ENCODE measurements at regions of chr6 and their contacts with region 1.

Region 1: GRCh38 chr6:71420693-71421328 is 132.2 kb downstream of the OGFRL1 start:
- DNase-seq: peak; percentile 99
- H3K4me3 ChIP-seq: peak overlapping the region; percentile 74 to 95 (median 88)
- H3K27ac ChIP-seq: peak overlapping the region; percentile 94 to 99 (median 96)
- H3K4me1 ChIP-seq: peaks cover 0 to 25% (median 6%) of the 10 kb centered on the region in 4 donors
- H3K27me3 ChIP-seq: no peaks in the 10 kb centered on the region
- CTCF ChIP-seq: no peak
- EP300 ChIP-seq: no peak
- POLR2A ChIP-seq: peak; percentile 90 to 94

Region 2: GRCh38 chr6:71288228-71289001 is 132.4 kb before region 1 on chr6 and contains the start of gene OGFRL1:
- intact Hi-C with region 1: loop called (anchors 5 kb)
- DNase-seq: peak; percentile 88
- H3K4me3 ChIP-seq: peak within 1 kb of the TSS; percentile 65 to 85 (median 80)
- H3K27ac ChIP-seq: peak within 1 kb of the TSS; percentile 89 to 94 (median 92)
- H3K4me1 ChIP-seq: peaks cover 0 to 28% (median 14%) of the 10 kb centered on the region in 4 donors
- H3K27me3 ChIP-seq: no peaks in the 10 kb centered on the region
- CTCF ChIP-seq: no peak
- EP300 ChIP-seq: no peak
- POLR2A ChIP-seq: peak; percentile 30 to 46
- total RNA-seq, gene OGFRL1: 23.0 to 58.5 (median 30.6) TPM

Region 3: GRCh38 chr6:71333697-71334096 is 87.1 kb before region 1 on chr6:
- intact Hi-C with region 1: no loop called
- DNase-seq: peak; percentile 62
- H3K4me3 ChIP-seq: no peak overlapping the region
- H3K27ac ChIP-seq: no peak overlapping the region
- H3K4me1 ChIP-seq: peaks cover 0 to 4% (median 0%) of the 10 kb centered on the region in 4 donors
- H3K27me3 ChIP-seq: no peaks in the 10 kb centered on the region
- CTCF ChIP-seq: no peak
- EP300 ChIP-seq: no peak
- POLR2A ChIP-seq: no peak

Region 4: GRCh38 chr6:71404145-71404966 is 16.5 kb before region 1 on chr6:
- intact Hi-C with region 1: loop called (anchors 2 kb)
- DNase-seq: no peak
- H3K4me3 ChIP-seq: no peak overlapping the region
- H3K27ac ChIP-seq: peak overlapping the region; percentile 28 to 73 (median 50)
- H3K4me1 ChIP-seq: peaks cover 0 to 65% (median 18%) of the 10 kb centered on the region in 4 donors
- H3K27me3 ChIP-seq: no peaks in the 10 kb centered on the region
- CTCF ChIP-seq: no peak
- EP300 ChIP-seq: no peak
- POLR2A ChIP-seq: no peak

Measured in sigmoid colon (tissue), 7 donors.